Activated B cell treated with CpG ODN at 0.5 μM for 24 hours (primary cell): ENCODE measurements at regions of chr10 and their contacts with region 1.

Region 1: GRCh38 chr10:103692952-103693802 is 162.2 kb downstream of the SH3PXD2A start:
- DNase-seq: peak; percentile 57
- ATAC-seq: peak; percentile 42
- H3K4me3 Mint-ChIP-seq: peak overlapping the region; percentile 90
- H3K27ac Mint-ChIP-seq: peak overlapping the region; percentile 71
- H3K4me1 Mint-ChIP-seq: peaks cover 51% of the 10 kb centered on the region
- H3K27me3 Mint-ChIP-seq: no peaks in the 10 kb centered on the region
- CTCF ChIP-seq: no peak

Region 2: DNA sequence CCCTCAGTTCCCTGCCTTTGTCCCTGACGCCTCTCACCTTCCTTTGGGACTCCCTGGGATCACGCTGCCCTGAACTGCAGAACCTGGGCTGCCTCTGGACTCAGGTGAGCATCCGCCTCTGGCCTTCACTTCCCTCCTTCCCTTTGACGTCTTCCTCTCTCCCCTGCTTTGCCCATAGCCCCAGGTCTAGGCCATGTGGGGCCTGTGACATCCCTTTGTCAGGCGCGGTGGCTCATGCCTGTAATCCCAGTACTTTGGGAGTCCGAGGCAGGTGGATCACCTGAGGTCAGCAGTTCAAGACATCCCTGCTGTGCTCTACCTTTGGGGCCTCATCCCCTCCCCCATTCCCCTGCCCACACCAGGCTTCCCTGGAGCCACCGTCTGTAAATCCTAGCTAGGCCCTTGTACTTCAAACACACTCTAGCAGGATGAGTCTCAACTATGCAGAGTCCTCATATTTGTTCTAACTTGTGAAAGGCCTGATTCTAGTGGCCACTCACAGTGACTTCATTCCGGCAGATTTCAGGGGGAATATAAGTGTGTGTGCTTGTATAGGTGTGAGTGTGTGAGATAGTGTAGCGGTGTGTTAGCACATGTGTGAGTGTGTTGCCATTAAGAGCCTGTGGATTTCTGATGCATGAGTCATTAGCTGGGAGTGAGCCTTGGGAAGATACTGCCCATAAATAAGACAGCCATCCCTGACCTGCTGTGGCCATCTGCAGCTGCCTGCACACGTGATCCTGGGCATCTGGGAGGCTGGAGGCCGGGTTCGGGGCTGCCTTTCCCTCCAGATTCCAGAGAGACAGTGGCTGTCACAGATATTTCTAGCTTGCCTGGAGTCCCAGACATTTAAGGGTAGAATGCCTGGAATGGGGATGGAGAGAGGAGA is 201.4 kb before region 1 on chr10:
- CTCF ChIA-PET with region 1: no interaction called
- POLR2A ChIA-PET with region 1: no interaction called
- intact Hi-C with region 1: loop called (anchors 5 kb)
- DNase-seq: no peak
- ATAC-seq: no peak
- H3K4me3 Mint-ChIP-seq: no peak overlapping the region
- H3K27ac Mint-ChIP-seq: no peak overlapping the region
- H3K4me1 Mint-ChIP-seq: peaks cover 31% of the 10 kb centered on the region
- H3K27me3 Mint-ChIP-seq: peaks cover 24% of the 10 kb centered on the region
- CTCF ChIP-seq: no peak

Region 3: GRCh38 chr10:103678178-103678526 is 15.0 kb before region 1 on chr10:
- CTCF ChIA-PET with region 1: interaction called, 8 read pairs
- POLR2A ChIA-PET with region 1: interaction called, 27 read pairs
- intact Hi-C with region 1: loop called (anchors 1 kb)
- DNase-seq: peak; percentile 79
- ATAC-seq: peak; percentile 93
- H3K4me3 Mint-ChIP-seq: peak overlapping the region; percentile 80
- H3K27ac Mint-ChIP-seq: peak overlapping the region; percentile 88
- H3K4me1 Mint-ChIP-seq: peaks cover 40% of the 10 kb centered on the region
- H3K27me3 Mint-ChIP-seq: no peaks in the 10 kb centered on the region
- CTCF ChIP-seq: no peak

Region 4: DNA sequence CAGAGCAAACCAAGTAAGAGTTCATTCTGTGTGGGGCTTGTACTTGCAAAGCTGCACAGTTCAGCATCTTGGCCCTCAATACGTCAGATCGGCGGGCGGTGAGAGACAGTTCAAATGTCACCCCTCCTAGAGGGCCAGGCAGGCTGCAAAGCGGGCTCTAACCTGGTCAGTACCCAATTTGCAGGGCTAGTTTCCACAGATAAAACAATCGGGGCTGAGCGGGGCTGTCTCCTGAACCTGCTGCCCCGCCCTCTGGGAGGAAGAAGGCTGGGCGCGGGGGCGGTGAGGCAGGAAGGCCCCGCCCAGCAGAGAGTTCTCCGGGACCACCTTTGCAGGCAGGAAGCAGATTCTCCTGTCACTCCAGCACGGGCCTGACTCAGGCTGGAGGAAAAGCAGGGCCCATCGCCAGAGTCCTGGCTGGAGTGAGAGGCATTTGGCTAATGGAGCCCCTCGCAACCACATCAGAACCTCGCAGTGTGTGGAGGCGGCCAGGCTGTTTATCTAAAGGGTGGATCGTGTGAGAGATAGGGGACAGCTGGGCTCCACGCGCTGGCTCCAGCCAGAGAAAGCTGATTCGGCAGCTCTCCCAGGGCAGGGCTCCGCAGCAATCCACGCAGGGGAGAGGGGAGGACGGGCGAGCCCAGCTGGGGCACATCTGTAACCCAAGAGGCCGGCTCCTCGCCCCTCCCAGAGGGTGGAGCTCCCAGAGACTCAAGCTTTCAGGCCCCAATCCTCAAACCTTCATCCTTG is 79.1 kb after region 1 on chr10:
- CTCF ChIA-PET with region 1: no interaction called
- POLR2A ChIA-PET with region 1: no interaction called
- intact Hi-C with region 1: loop called (anchors 2 kb)
- DNase-seq: peak; percentile 36
- ATAC-seq: peak; percentile 84
- H3K4me3 Mint-ChIP-seq: peak overlapping the region; percentile 90
- H3K27ac Mint-ChIP-seq: peak overlapping the region; percentile 71
- H3K4me1 Mint-ChIP-seq: peaks cover 47% of the 10 kb centered on the region
- H3K27me3 Mint-ChIP-seq: peaks cover 4% of the 10 kb centered on the region
- CTCF ChIP-seq: no peak

Region 5: DNA sequence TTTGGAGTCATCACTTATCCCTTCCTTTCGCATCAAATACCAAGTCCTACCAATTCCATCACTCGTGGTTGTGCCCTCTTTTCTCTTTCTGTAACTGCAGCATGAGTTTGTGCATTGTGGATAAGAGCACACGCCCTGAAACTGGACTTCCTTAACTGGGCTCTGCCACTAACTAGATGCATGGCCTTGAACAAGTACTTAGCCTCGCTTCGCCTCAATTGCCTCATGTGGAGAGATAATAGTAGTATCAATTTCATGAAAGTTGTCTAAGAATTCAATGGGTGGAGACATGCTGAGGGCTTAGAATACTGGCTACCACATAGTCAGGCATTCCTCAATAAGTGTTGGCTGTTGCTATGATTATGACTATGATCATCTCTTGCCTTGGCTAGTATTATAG is 497.5 kb after region 1 on chr10:
- CTCF ChIA-PET with region 1: no interaction called
- POLR2A ChIA-PET with region 1: no interaction called
- intact Hi-C with region 1: no loop called
- DNase-seq: no peak
- ATAC-seq: no peak
- H3K4me3 Mint-ChIP-seq: no peak overlapping the region
- H3K27ac Mint-ChIP-seq: no peak overlapping the region
- H3K4me1 Mint-ChIP-seq: no peaks in the 10 kb centered on the region
- H3K27me3 Mint-ChIP-seq: peaks cover 20% of the 10 kb centered on the region
- CTCF ChIP-seq: no peak